ENCODE measurements at regions of chr12 and their contacts with region 1.

Region 1: DNA sequence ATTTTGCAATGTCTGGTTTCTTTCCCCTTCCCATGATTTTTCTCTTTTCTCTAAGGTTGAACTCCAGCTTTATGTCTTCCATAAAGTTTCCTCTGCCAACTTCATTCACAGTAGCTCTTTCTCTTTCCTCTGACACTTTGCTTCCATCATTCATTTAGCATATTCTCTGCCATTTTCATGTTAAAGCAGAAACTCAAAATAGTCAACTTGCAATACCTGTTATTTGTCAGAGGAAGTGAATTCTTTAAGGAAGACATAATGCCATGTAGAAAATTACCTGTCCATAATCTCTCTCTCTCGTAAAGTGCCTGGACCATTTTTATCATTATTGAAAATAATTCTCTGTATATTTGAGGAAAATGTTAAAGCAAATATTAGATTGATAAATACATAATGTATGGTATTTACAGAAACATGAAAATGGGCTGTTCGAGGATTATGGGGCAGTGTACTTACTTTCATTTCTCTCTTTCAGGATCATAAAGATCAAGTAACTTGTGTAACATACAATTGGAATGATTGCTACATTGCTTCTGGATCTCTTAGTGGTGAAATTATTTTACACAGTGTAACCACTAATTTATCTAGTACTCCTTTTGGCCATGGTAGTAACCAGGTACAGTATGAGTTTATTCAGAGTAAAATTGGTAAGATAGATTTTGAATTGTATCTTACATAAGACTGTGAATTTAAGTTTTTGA is 12.6 kb downstream of the NEDD1 start:
- DNase-seq: no peak
- ATAC-seq: no peak
- H3K4me3 ChIP-seq: no peak overlapping the region
- H3K4me3 Mint-ChIP-seq: no peak overlapping the region
- H3K27ac ChIP-seq: no peak overlapping the region
- H3K27ac Mint-ChIP-seq: peak overlapping the region; percentile 15
- H3K4me1 ChIP-seq: no peaks in the 10 kb centered on the region
- H3K4me1 Mint-ChIP-seq: peaks cover 15% of the 10 kb centered on the region
- H3K27me3 ChIP-seq: no peaks in the 10 kb centered on the region
- H3K27me3 Mint-ChIP-seq: no peaks in the 10 kb centered on the region
- CTCF ChIP-seq: no peak

Region 2: GRCh38 chr12:95224202-95225170 is 1695.2 kb before region 1 on chr12:
- CTCF ChIA-PET with region 1: no interaction called
- POLR2A ChIA-PET with region 1: no interaction called
- intact Hi-C with region 1: loop called in 1 of 2 experiments (anchors 10 kb)
- DNase-seq: no peak
- ATAC-seq: no peak
- H3K4me3 ChIP-seq: no peak overlapping the region
- H3K4me3 Mint-ChIP-seq: no peak overlapping the region
- H3K27ac ChIP-seq: no peak overlapping the region
- H3K27ac Mint-ChIP-seq: no peak overlapping the region
- H3K4me1 ChIP-seq: no peaks in the 10 kb centered on the region
- H3K4me1 Mint-ChIP-seq: peaks cover 56% of the 10 kb centered on the region
- H3K27me3 ChIP-seq: no peaks in the 10 kb centered on the region
- H3K27me3 Mint-ChIP-seq: no peaks in the 10 kb centered on the region
- CTCF ChIP-seq: no peak

Region 3: GRCh38 chr12:96979532-96979931 is 59.9 kb after region 1 on chr12:
- CTCF ChIA-PET with region 1: no interaction called
- POLR2A ChIA-PET with region 1: no interaction called
- intact Hi-C with region 1: loop called in 1 of 2 experiments (anchors 5 kb)
- DNase-seq: no peak
- ATAC-seq: no peak
- H3K4me3 ChIP-seq: no peak overlapping the region
- H3K4me3 Mint-ChIP-seq: no peak overlapping the region
- H3K27ac ChIP-seq: no peak overlapping the region
- H3K27ac Mint-ChIP-seq: no peak overlapping the region
- H3K4me1 ChIP-seq: no peaks in the 10 kb centered on the region
- H3K4me1 Mint-ChIP-seq: no peaks in the 10 kb centered on the region
- H3K27me3 ChIP-seq: peaks cover 0 to 2% of the 10 kb centered on the region in 2 experiments
- H3K27me3 Mint-ChIP-seq: peaks cover 6% of the 10 kb centered on the region
- CTCF ChIP-seq: no peak

Measured in CD8-positive, alpha-beta T cell (primary cell).